Caco-2 (cell line): ENCODE measurements at regions of chr2 and their contacts with region 1.

Region 1: GRCh38 chr2:98378930-98379671 is 32.8 kb downstream of the CNGA3 start:
- DNase-seq: no peak
- H3K4me3 ChIP-seq: no peak overlapping the region
- H3K4me3 Mint-ChIP-seq: no peak overlapping the region
- H3K27ac Mint-ChIP-seq: no peak overlapping the region
- H3K4me1 ChIP-seq: no peaks in the 10 kb centered on the region
- H3K4me1 Mint-ChIP-seq: no peaks in the 10 kb centered on the region
- H3K27me3 ChIP-seq: no peaks in the 10 kb centered on the region; the same call in 1 of the 2 replicates
- H3K27me3 Mint-ChIP-seq: peaks cover 2% of the 10 kb centered on the region
- CTCF ChIP-seq: no peak

Region 2: GRCh38 chr2:98188351-98189049 is 190.6 kb before region 1 on chr2:
- CTCF ChIA-PET with region 1: no interaction called
- POLR2A ChIA-PET with region 1: no interaction called
- intact Hi-C with region 1: loop called (anchors 10 kb)
- DNase-seq: peak; percentile 54 to 64
- H3K4me3 ChIP-seq: no peak overlapping the region
- H3K4me3 Mint-ChIP-seq: no peak overlapping the region
- H3K27ac Mint-ChIP-seq: no peak overlapping the region
- H3K4me1 ChIP-seq: peaks cover 12% of the 10 kb centered on the region
- H3K4me1 Mint-ChIP-seq: no peaks in the 10 kb centered on the region
- H3K27me3 ChIP-seq: no peaks in the 10 kb centered on the region
- H3K27me3 Mint-ChIP-seq: no peaks in the 10 kb centered on the region
- CTCF ChIP-seq: no peak

Region 3: DNA sequence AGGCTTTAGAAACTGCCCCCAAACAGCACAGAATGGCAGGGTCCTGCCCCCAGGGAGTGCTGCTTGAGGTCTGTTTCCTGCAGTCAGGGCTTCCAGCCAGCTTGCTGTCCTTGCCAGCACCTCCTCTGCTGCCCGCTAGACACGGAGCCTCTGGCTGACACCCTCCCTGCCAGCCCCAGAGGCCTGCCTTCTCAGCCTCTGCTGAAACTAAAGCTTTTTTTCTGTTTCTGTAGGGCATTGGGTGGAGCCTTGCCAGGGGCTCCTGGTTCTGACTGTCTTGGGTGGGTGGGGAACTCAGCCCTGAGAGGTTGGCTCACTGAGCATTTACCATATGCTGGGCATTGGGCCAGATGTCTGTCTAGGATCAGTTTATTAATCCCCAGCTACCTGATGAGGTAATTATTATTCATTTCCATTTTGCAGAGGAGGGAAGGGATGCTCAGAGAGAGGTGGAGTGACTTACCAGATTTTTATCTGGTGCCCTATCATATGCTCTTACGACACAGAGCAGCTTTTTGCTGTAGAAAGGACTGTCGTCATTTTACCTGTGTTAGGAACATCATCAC is 100.9 kb after region 1 on chr2:
- CTCF ChIA-PET with region 1: no interaction called
- POLR2A ChIA-PET with region 1: no interaction called
- intact Hi-C with region 1: no loop called
- DNase-seq: no peak
- H3K4me3 ChIP-seq: no peak overlapping the region
- H3K4me3 Mint-ChIP-seq: no peak overlapping the region
- H3K27ac Mint-ChIP-seq: no peak overlapping the region
- H3K4me1 ChIP-seq: peaks cover 21% of the 10 kb centered on the region
- H3K4me1 Mint-ChIP-seq: peaks cover 19% of the 10 kb centered on the region
- H3K27me3 ChIP-seq: no peaks in the 10 kb centered on the region
- H3K27me3 Mint-ChIP-seq: no peaks in the 10 kb centered on the region
- CTCF ChIP-seq: no peak